Posterior vena cava (tissue), 2 donors: ENCODE measurements at regions of chr10 and their contacts with region 1.

Region 1: GRCh38 chr10:11874542-11875177 is 51.5 kb downstream of the PROSER2 start:
- DNase-seq: peak; percentile 80

Region 2: GRCh38 chr10:11898372-11899066 is 23.9 kb after region 1 on chr10:
- intact Hi-C with region 1: loop called in 1 of 2 experiments (anchors 1 kb)
- DNase-seq: no peak